Spleen (tissue), 13 donors: ENCODE measurements at regions of chr6 and their contacts with region 1.

Region 1: GRCh38 chr6:128725271-128726233 is 157.4 kb upstream of the LAMA2 start:
- DNase-seq: no peak
- H3K4me3 ChIP-seq: no peak overlapping the region
- H3K27ac ChIP-seq: no peak overlapping the region
- H3K4me1 ChIP-seq: no peaks in the 10 kb centered on the region
- H3K27me3 ChIP-seq: peaks cover 0 to 4% (median 0%) of the 10 kb centered on the region in 7 donors
- CTCF ChIP-seq: peak in 8 of 11 experiments; percentile 19 to 55 (median 46)
- POLR2A ChIP-seq: no peak

Region 2: GRCh38 chr6:129370268-129370916 is 644.8 kb after region 1 on chr6:
- intact Hi-C with region 1: loop called (anchors 5 kb)
- DNase-seq: no peak
- H3K4me3 ChIP-seq: peak overlapping the region in 1 of 8 donors; percentile 24
- H3K27ac ChIP-seq: no peak overlapping the region
- H3K4me1 ChIP-seq: peaks cover 0 to 11% (median 3%) of the 10 kb centered on the region in 6 donors
- H3K27me3 ChIP-seq: no peaks in the 10 kb centered on the region
- CTCF ChIP-seq: peak in 10 of 11 experiments; percentile 29 to 73 (median 62)
- POLR2A ChIP-seq: no peak